Activated B cell treated with CpG ODN at 0.5 μM for 24 hours (primary cell): ENCODE measurements at regions of chr3 and their contacts with region 1.

Region 1: GRCh38 chr3:156474560-156475389 is 80.1 kb downstream of the SSR3 start:
- DNase-seq: no peak
- ATAC-seq: no peak
- H3K4me3 Mint-ChIP-seq: no peak overlapping the region
- H3K27ac Mint-ChIP-seq: no peak overlapping the region
- H3K4me1 Mint-ChIP-seq: no peaks in the 10 kb centered on the region
- H3K27me3 Mint-ChIP-seq: peaks cover 24% of the 10 kb centered on the region
- CTCF ChIP-seq: no peak

Region 2: GRCh38 chr3:156443079-156443478 is 31.7 kb before region 1 on chr3:
- CTCF ChIA-PET with region 1: no interaction called
- POLR2A ChIA-PET with region 1: no interaction called
- intact Hi-C with region 1: no loop called
- DNase-seq: no peak
- ATAC-seq: no peak
- H3K4me3 Mint-ChIP-seq: no peak overlapping the region
- H3K27ac Mint-ChIP-seq: no peak overlapping the region
- H3K4me1 Mint-ChIP-seq: peaks cover 11% of the 10 kb centered on the region
- H3K27me3 Mint-ChIP-seq: peaks cover 15% of the 10 kb centered on the region
- CTCF ChIP-seq: no peak

Region 3: GRCh38 chr3:156455839-156456238 is 18.9 kb before region 1 on chr3:
- CTCF ChIA-PET with region 1: no interaction called
- POLR2A ChIA-PET with region 1: no interaction called
- intact Hi-C with region 1: no loop called
- DNase-seq: no peak
- ATAC-seq: no peak
- H3K4me3 Mint-ChIP-seq: no peak overlapping the region
- H3K27ac Mint-ChIP-seq: no peak overlapping the region
- H3K4me1 Mint-ChIP-seq: peaks cover 4% of the 10 kb centered on the region
- H3K27me3 Mint-ChIP-seq: peaks cover 8% of the 10 kb centered on the region
- CTCF ChIP-seq: no peak

Region 4: GRCh38 chr3:156542715-156543555 is 68.2 kb after region 1 on chr3:
- CTCF ChIA-PET with region 1: no interaction called
- POLR2A ChIA-PET with region 1: no interaction called
- intact Hi-C with region 1: loop called (anchors 2 kb)
- DNase-seq: no peak
- ATAC-seq: no peak
- H3K4me3 Mint-ChIP-seq: no peak overlapping the region
- H3K27ac Mint-ChIP-seq: no peak overlapping the region
- H3K4me1 Mint-ChIP-seq: no peaks in the 10 kb centered on the region
- H3K27me3 Mint-ChIP-seq: no peaks in the 10 kb centered on the region
- CTCF ChIP-seq: no peak